Activated CD4-positive, alpha-beta T cell treated with anti-CD3 and anti-CD28 coated beads for 36 hours (primary cell): ENCODE measurements at regions of chr11 and their contacts with region 1.

Region 1: GRCh38 chr11:116772443-116773202 is at the start of gene BUD13:
- DNase-seq: peak; percentile 97
- ATAC-seq: peak; percentile 91
- H3K4me3 Mint-ChIP-seq: peak within 1 kb of the TSS; percentile 95
- H3K27ac Mint-ChIP-seq: peak within 1 kb of the TSS; percentile 98
- H3K4me1 Mint-ChIP-seq: peaks cover 56% of the 10 kb centered on the region
- H3K27me3 Mint-ChIP-seq: no peaks in the 10 kb centered on the region
- total RNA-seq, gene BUD13: 30.2 to 35.6 TPM

Region 2: DNA sequence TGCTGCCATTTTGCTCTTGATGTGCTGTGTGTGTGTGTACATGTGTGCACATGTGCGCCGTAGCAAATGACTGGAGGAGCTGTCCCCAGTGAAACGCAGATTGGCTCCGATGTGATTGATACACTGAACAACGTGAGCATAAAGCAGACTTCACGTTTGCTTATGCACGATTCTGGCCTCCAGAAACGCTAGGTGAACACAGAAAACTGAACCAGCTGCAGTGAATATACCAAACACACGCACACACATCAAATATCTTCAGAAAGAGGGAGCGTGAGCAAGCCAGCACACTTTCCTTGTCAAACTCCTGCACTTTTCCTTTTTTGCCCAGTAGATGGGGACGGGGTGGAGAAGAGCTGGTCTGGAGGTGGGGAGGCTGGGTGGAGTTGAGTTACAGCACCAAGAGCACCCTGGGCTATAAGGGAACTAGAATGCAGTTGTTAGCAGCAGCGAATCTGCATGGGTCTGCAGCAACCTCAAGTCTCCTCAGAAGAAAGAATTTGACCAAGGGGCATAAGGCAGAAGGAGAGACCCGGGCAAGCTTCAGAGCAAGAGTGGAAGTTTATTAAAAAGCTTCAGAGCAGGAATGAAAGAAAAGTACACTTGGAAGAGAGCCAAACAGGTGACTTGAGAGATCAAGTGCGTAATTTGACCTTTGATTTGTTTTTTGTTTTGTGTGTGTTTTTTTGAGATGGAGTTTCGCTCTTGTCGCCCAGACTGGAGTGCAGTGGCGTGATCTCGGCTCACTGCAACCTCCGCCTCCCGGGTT is 1190.6 kb before region 1 on chr11:
- CTCF ChIA-PET with region 1: no interaction called
- POLR2A ChIA-PET with region 1: no interaction called
- intact Hi-C with region 1: no loop called
- DNase-seq: no peak
- ATAC-seq: no peak
- H3K4me3 Mint-ChIP-seq: no peak overlapping the region
- H3K27ac Mint-ChIP-seq: no peak overlapping the region
- H3K4me1 Mint-ChIP-seq: no peaks in the 10 kb centered on the region
- H3K27me3 Mint-ChIP-seq: peaks cover 4% of the 10 kb centered on the region

Region 3: GRCh38 chr11:116387641-116388040 is 385.0 kb before region 1 on chr11:
- CTCF ChIA-PET with region 1: no interaction called
- POLR2A ChIA-PET with region 1: no interaction called
- intact Hi-C with region 1: no loop called
- DNase-seq: no peak
- ATAC-seq: no peak
- H3K4me3 Mint-ChIP-seq: no peak overlapping the region
- H3K27ac Mint-ChIP-seq: no peak overlapping the region
- H3K4me1 Mint-ChIP-seq: no peaks in the 10 kb centered on the region
- H3K27me3 Mint-ChIP-seq: no peaks in the 10 kb centered on the region

Region 4: GRCh38 chr11:116835791-116836631 is 63.4 kb after region 1 on chr11:
- CTCF ChIA-PET with region 1: interaction called, 6 read pairs
- POLR2A ChIA-PET with region 1: no interaction called
- intact Hi-C with region 1: loop called in 1 of 2 experiments (anchors 1 kb)
- DNase-seq: peak; percentile 90
- ATAC-seq: peak; percentile 95
- H3K4me3 Mint-ChIP-seq: peak overlapping the region; percentile 59
- H3K27ac Mint-ChIP-seq: peak overlapping the region; percentile 31
- H3K4me1 Mint-ChIP-seq: peaks cover 11% of the 10 kb centered on the region
- H3K27me3 Mint-ChIP-seq: peaks cover 3% of the 10 kb centered on the region

Region 5: GRCh38 chr11:117107701-117108590 is 335.3 kb after region 1 on chr11:
- CTCF ChIA-PET with region 1: interaction called, 3 read pairs
- POLR2A ChIA-PET with region 1: no interaction called
- intact Hi-C with region 1: loop called in 1 of 2 experiments (anchors 5 kb)
- DNase-seq: no peak
- ATAC-seq: no peak
- H3K4me3 Mint-ChIP-seq: no peak overlapping the region
- H3K27ac Mint-ChIP-seq: no peak overlapping the region
- H3K4me1 Mint-ChIP-seq: no peaks in the 10 kb centered on the region
- H3K27me3 Mint-ChIP-seq: no peaks in the 10 kb centered on the region

Region 6: GRCh38 chr11:117178210-117179034 is 405.8 kb after region 1 on chr11 and contains the start of gene SIDT2:
- CTCF ChIA-PET with region 1: interaction called, 3 read pairs
- POLR2A ChIA-PET with region 1: no interaction called
- intact Hi-C with region 1: loop called in 1 of 2 experiments (anchors 1 kb)
- DNase-seq: peak; percentile 95
- ATAC-seq: peak; percentile 91
- H3K4me3 Mint-ChIP-seq: peak within 1 kb of the TSS; percentile 87
- H3K27ac Mint-ChIP-seq: peak within 1 kb of the TSS; percentile 75
- H3K4me1 Mint-ChIP-seq: peaks cover 33% of the 10 kb centered on the region
- H3K27me3 Mint-ChIP-seq: no peaks in the 10 kb centered on the region
- total RNA-seq, gene SIDT2: 21.5 to 23.7 TPM